ENCODE measurements at regions of chr2 and their contacts with region 1.

Region 1: GRCh38 chr2:172172513-172173173 is 69.9 kb upstream of the DLX2 start:
- DNase-seq: peak; percentile 83

Region 2: GRCh38 chr2:172113617-172114016 is 59.0 kb before region 1 on chr2:
- in situ Hi-C with region 1: no loop called
- DNase-seq: peak; percentile 62

Region 3: DNA sequence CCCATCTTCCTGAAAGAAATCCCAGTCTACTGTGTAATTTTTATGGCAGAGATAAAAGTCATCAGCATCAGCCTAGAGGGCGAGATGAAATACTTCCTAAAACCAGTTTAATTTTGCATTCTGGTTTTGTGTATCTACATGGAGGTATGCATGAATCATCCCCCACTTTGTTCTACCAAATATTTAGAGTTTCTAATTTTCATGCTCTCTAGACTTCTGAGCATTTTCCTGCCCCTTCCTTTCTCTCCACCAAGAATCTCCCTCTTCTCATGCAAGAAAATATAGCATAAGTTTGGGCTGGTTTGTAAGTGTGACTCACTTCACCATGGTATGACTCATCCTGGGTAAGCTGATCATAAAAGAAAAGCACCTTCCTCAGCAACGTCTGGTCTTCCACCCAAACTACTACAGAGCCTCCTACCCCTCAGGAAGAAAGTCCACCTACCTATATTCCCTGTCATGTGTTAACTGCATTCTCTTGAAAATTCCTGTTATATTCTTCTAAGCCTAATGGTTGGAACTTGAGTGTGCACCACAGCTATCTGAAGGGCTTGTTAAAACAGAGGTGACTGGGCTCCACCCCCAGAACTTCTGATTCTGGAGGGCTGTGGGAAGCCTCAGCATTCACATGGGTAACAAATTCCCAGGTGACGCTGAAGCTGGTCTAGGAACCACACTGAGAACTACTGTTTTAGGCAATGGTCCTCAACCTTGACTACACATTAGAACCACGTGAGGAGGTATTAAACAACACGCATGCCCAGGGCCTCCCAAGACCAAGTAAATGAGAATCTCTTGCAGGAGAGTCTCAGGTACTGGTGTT is 525.6 kb after region 1 on chr2:
- in situ Hi-C with region 1: loop called (anchors 25 kb)
- DNase-seq: peak; percentile 60